Gastrocnemius medialis (tissue), 4 donors: ENCODE measurements at regions of chr14 and their contacts with region 1.

Region 1: GRCh38 chr14:73785873-73786695 is 65.5 kb upstream of the PTGR2 start:
- DNase-seq: peak; percentile 83 to 86
- ATAC-seq: peak; percentile 82 to 88
- H3K4me3 ChIP-seq: peak overlapping the region; percentile 70 to 84 (median 78)
- H3K27ac ChIP-seq: peak overlapping the region; percentile 90 to 97 (median 96)
- H3K4me1 ChIP-seq: peaks cover 69% of the 10 kb centered on the region in 2 donors
- H3K27me3 ChIP-seq: no peaks in the 10 kb centered on the region
- CTCF ChIP-seq: peak; percentile 46 to 66 (median 58)
- POLR2A ChIP-seq: peak; percentile 69 to 77

Region 2: DNA sequence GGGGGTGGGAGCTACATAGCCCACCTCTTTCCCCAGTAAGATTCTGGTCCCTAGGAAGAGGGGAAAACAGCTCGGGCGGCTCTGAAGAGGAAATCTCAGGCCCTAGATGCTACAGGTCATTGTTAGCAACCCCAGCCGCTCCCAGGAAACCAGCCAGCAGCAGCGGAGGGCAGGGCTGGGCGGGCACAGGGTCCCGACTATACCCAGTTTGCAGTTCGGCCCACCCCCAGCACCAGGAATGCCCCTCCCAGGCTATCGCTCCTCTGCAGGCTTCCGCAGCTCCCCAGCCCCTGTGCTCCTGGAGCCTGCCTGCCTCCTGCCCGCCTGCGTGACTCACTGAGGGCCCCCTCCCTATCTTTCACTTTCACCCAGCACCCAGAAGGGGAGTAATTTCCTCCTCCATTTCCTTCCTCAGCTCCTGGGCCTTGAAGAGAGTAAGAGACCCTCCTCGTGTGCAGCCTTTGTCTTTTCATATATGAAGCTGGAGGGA is 44.7 kb before region 1 on chr14:
- in situ Hi-C with region 1: loop called in 1 of 4 experiments (anchors 10 kb)
- intact Hi-C with region 1: no loop called
- DNase-seq: peak in 1 of 2 donors; percentile 52
- ATAC-seq: peak; percentile 23 to 30
- H3K4me3 ChIP-seq: peak overlapping the region; percentile 9 to 31 (median 11)
- H3K27ac ChIP-seq: peak overlapping the region; percentile 71 to 85 (median 80)
- H3K4me1 ChIP-seq: peaks cover 75 to 82% of the 10 kb centered on the region in 2 donors
- H3K27me3 ChIP-seq: no peaks in the 10 kb centered on the region
- CTCF ChIP-seq: no peak
- POLR2A ChIP-seq: no peak

Region 3: DNA sequence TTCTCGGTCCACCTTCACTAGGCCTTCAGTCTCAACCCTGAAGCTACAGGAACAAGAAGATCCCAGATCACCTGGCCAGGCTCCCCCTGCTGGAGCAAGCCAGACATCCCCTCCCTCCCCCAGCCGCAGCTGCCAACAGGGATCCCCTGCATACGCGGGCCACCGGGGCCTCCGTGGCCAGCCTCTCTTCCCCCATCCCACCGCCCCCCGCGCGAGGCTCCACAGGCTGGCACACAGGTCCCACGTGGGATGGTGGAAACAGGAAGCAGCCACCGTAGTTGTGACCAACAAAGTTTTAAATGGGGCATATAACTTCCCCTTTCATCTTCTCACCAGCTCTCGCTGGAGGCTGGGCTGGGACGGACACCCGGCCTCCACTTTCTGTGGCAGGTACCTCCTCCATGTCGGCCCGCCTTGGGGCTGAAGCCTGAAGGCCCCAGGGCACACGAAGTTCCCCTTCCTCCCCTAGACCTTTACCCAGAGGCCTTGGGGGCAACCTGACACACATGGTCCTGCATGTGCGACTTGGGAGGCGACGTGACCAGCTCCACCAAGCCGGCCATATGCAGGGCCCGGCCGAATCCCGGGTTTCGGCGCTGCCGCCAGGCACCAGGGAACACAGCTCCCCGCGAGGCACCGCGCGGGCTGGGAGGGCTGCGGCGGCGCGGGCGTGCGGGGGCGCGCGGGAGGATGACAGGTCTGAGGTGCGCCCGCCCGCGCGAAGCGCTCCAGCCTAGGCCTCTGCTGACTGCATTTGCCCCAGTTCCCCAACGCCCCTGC is 27.5 kb before region 1 on chr14:
- in situ Hi-C with region 1: no loop called
- intact Hi-C with region 1: loop called (anchors 1 kb)
- DNase-seq: peak; percentile 68 to 81
- ATAC-seq: peak in 1 of 2 donors; percentile 11
- H3K4me3 ChIP-seq: peak overlapping the region; percentile 61 to 91 (median 76)
- H3K27ac ChIP-seq: peak overlapping the region; percentile 89 to 98 (median 94)
- H3K4me1 ChIP-seq: peaks cover 85 to 87% of the 10 kb centered on the region in 2 donors
- H3K27me3 ChIP-seq: no peaks in the 10 kb centered on the region
- CTCF ChIP-seq: peak; percentile 49 to 67 (median 65)
- POLR2A ChIP-seq: no peak

Region 4: GRCh38 chr14:73771848-73772638 is 14.0 kb before region 1 on chr14:
- in situ Hi-C with region 1: no loop called
- intact Hi-C with region 1: loop called (anchors 2 kb)
- DNase-seq: peak; percentile 40 to 76
- ATAC-seq: peak; percentile 67 to 77
- H3K4me3 ChIP-seq: peak overlapping the region in 1 of 4 donors; percentile 4
- H3K27ac ChIP-seq: peak overlapping the region; percentile 79 to 96 (median 80)
- H3K4me1 ChIP-seq: peaks cover 82 to 88% of the 10 kb centered on the region in 2 donors
- H3K27me3 ChIP-seq: no peaks in the 10 kb centered on the region
- CTCF ChIP-seq: no peak
- POLR2A ChIP-seq: no peak